ENCODE measurements at regions of chr15 and their contacts with region 1.

Region 1: GRCh38 chr15:69160141-69160993 is at the start of gene GLCE:
- DNase-seq: peak; percentile 95
- ATAC-seq: peak; percentile 96
- H3K4me3 ChIP-seq: peak within 1 kb of the TSS; percentile 58 to 86 (median 76)
- H3K4me3 Mint-ChIP-seq: peak within 1 kb of the TSS; percentile 96
- H3K27ac ChIP-seq: peak within 1 kb of the TSS; percentile 8 to 70
- H3K27ac Mint-ChIP-seq: peak within 1 kb of the TSS; percentile 83
- H3K4me1 ChIP-seq: peaks cover 12 to 13% of the 10 kb centered on the region in 2 donors
- H3K4me1 Mint-ChIP-seq: peaks cover 16% of the 10 kb centered on the region
- H3K27me3 ChIP-seq: no peaks in the 10 kb centered on the region
- H3K27me3 Mint-ChIP-seq: peaks cover 12% of the 10 kb centered on the region
- CTCF ChIP-seq: no peak
- total RNA-seq, gene GLCE: 5.3 and 5.4 TPM in 2 replicates

Region 2: GRCh38 chr15:67967871-67968431 is 1192.4 kb before region 1 on chr15:
- CTCF ChIA-PET with region 1: no interaction called
- POLR2A ChIA-PET with region 1: interaction called, 12 read pairs
- intact Hi-C with region 1: no loop called
- DNase-seq: peak; percentile 39
- ATAC-seq: no peak
- H3K4me3 ChIP-seq: peak overlapping the region in 2 of 5 experiments; percentile 27 to 36
- H3K4me3 Mint-ChIP-seq: peak overlapping the region; percentile 75
- H3K27ac ChIP-seq: no peak overlapping the region
- H3K27ac Mint-ChIP-seq: no peak overlapping the region
- H3K4me1 ChIP-seq: peaks cover 11% of the 10 kb centered on the region in 2 donors
- H3K4me1 Mint-ChIP-seq: peaks cover 13% of the 10 kb centered on the region
- H3K27me3 ChIP-seq: peaks cover 0 to 14% (median 8%) of the 10 kb centered on the region in 4 experiments
- H3K27me3 Mint-ChIP-seq: peaks cover 38% of the 10 kb centered on the region
- CTCF ChIP-seq: no peak

Region 3: GRCh38 chr15:69090197-69090948 is 70.0 kb before region 1 on chr15:
- CTCF ChIA-PET with region 1: no interaction called
- POLR2A ChIA-PET with region 1: no interaction called
- intact Hi-C with region 1: no loop called
- DNase-seq: no peak
- ATAC-seq: no peak
- H3K4me3 ChIP-seq: no peak overlapping the region
- H3K4me3 Mint-ChIP-seq: no peak overlapping the region
- H3K27ac ChIP-seq: no peak overlapping the region
- H3K27ac Mint-ChIP-seq: no peak overlapping the region
- H3K4me1 ChIP-seq: no peaks in the 10 kb centered on the region
- H3K4me1 Mint-ChIP-seq: no peaks in the 10 kb centered on the region
- H3K27me3 ChIP-seq: peaks cover 0 to 9% (median 0%) of the 10 kb centered on the region in 4 experiments
- H3K27me3 Mint-ChIP-seq: peaks cover 42% of the 10 kb centered on the region
- CTCF ChIP-seq: no peak

Region 4: GRCh38 chr15:69185706-69186105 is 25.3 kb after region 1 on chr15:
- CTCF ChIA-PET with region 1: no interaction called
- POLR2A ChIA-PET with region 1: no interaction called
- intact Hi-C with region 1: no loop called
- DNase-seq: peak; percentile 16
- ATAC-seq: no peak
- H3K4me3 ChIP-seq: no peak overlapping the region
- H3K4me3 Mint-ChIP-seq: no peak overlapping the region
- H3K27ac ChIP-seq: no peak overlapping the region
- H3K27ac Mint-ChIP-seq: no peak overlapping the region
- H3K4me1 ChIP-seq: peaks cover 7 to 10% of the 10 kb centered on the region in 2 donors
- H3K4me1 Mint-ChIP-seq: peaks cover 14% of the 10 kb centered on the region
- H3K27me3 ChIP-seq: no peaks in the 10 kb centered on the region
- H3K27me3 Mint-ChIP-seq: no peaks in the 10 kb centered on the region
- CTCF ChIP-seq: no peak

Region 5: GRCh38 chr15:69213786-69214185 is 53.4 kb after region 1 on chr15:
- CTCF ChIA-PET with region 1: no interaction called
- POLR2A ChIA-PET with region 1: no interaction called
- intact Hi-C with region 1: no loop called
- DNase-seq: no peak
- ATAC-seq: no peak
- H3K4me3 ChIP-seq: no peak overlapping the region
- H3K4me3 Mint-ChIP-seq: no peak overlapping the region
- H3K27ac ChIP-seq: no peak overlapping the region
- H3K27ac Mint-ChIP-seq: no peak overlapping the region
- H3K4me1 ChIP-seq: no peaks in the 10 kb centered on the region
- H3K4me1 Mint-ChIP-seq: no peaks in the 10 kb centered on the region
- H3K27me3 ChIP-seq: no peaks in the 10 kb centered on the region
- H3K27me3 Mint-ChIP-seq: no peaks in the 10 kb centered on the region
- CTCF ChIP-seq: no peak

Region 6: GRCh38 chr15:69394556-69395282 is 234.4 kb after region 1 on chr15:
- CTCF ChIA-PET with region 1: interaction called, 7 read pairs
- POLR2A ChIA-PET with region 1: no interaction called
- intact Hi-C with region 1: loop called (anchors 1 kb)
- DNase-seq: peak; percentile 86
- ATAC-seq: peak; percentile 98
- H3K4me3 ChIP-seq: no peak overlapping the region
- H3K4me3 Mint-ChIP-seq: peak overlapping the region; percentile 13
- H3K27ac ChIP-seq: no peak overlapping the region
- H3K27ac Mint-ChIP-seq: no peak overlapping the region
- H3K4me1 ChIP-seq: peaks cover 3 to 7% of the 10 kb centered on the region in 2 donors
- H3K4me1 Mint-ChIP-seq: peaks cover 6% of the 10 kb centered on the region
- H3K27me3 ChIP-seq: peaks cover 0 to 3% (median 0%) of the 10 kb centered on the region in 4 experiments
- H3K27me3 Mint-ChIP-seq: peaks cover 3% of the 10 kb centered on the region
- CTCF ChIP-seq: peak; percentile 93

Region 7: DNA sequence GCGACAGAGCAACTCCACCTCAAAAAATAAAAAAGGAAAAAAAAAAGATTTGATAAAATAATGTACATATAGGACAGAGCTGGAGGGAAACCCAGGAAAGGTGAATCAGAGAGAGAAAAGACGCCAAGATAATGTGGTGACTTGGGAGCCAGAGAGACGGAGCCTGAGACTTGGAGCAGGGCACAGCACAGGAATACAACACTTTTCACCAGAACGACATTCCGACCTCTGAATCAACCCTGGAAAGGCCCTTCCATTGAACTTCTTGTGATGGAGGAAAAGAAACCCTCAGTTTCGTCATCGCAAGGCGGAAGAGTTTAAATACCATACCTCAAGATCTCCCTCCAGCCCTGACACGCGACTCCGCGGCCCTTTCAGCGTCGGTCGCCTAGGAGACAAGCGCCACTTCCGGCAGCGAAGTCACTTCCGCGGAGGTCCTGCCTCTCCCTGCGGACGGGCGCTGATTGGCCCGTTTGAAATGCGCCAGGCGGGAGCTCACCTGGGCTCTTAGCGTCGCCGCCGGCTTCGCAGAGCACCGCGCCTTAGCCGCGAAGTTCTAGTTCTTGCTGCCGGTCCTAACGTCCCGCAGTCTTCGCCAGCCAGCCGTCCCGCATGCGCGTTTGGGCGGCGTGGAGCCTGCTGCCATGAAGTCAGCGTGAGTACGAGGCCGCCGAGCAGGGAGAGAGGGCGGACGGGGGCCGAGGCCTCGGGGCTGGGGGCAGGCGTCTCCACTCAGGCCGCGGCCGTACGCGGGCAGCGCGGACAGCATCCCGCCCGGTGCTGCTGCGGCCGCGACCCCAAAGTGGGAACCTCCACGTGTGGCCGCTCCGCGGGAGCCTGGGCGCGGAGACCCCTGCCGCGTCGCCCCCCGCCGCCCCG is 253.7 kb after region 1 on chr15 and contains the start of gene KIF23:
- CTCF ChIA-PET with region 1: no interaction called
- POLR2A ChIA-PET with region 1: no interaction called
- intact Hi-C with region 1: loop called (anchors 1 kb)
- DNase-seq: peak; percentile 94
- ATAC-seq: peak; percentile 96
- H3K4me3 ChIP-seq: peak within 1 kb of the TSS; percentile 58 to 80 (median 70)
- H3K4me3 Mint-ChIP-seq: peak within 1 kb of the TSS; percentile 93
- H3K27ac ChIP-seq: no peak within 1 kb of the TSS
- H3K27ac Mint-ChIP-seq: peak within 1 kb of the TSS; percentile 62
- H3K4me1 ChIP-seq: peaks cover 5 to 9% of the 10 kb centered on the region in 2 donors
- H3K4me1 Mint-ChIP-seq: peaks cover 13% of the 10 kb centered on the region
- H3K27me3 ChIP-seq: peaks cover 0 to 8% (median 2%) of the 10 kb centered on the region in 4 experiments
- H3K27me3 Mint-ChIP-seq: peaks cover 16% of the 10 kb centered on the region
- CTCF ChIP-seq: no peak
- total RNA-seq, gene KIF23: 0.30 and 0.41 TPM in 2 replicates

Region 8: GRCh38 chr15:69452692-69453521 is 292.5 kb after region 1 on chr15 and contains the start of gene RPLP1:
- CTCF ChIA-PET with region 1: no interaction called
- POLR2A ChIA-PET with region 1: interaction called, 7 read pairs
- intact Hi-C with region 1: loop called (anchors 2 kb)
- DNase-seq: peak; percentile 97
- ATAC-seq: peak; percentile 91
- H3K4me3 ChIP-seq: peak within 1 kb of the TSS; percentile 77 to 97 (median 88)
- H3K4me3 Mint-ChIP-seq: peak within 1 kb of the TSS; percentile 100
- H3K27ac ChIP-seq: peak within 1 kb of the TSS; percentile 77 to 93
- H3K27ac Mint-ChIP-seq: peak within 1 kb of the TSS; percentile 100
- H3K4me1 ChIP-seq: peaks cover 26% of the 10 kb centered on the region in 2 donors
- H3K4me1 Mint-ChIP-seq: peaks cover 43% of the 10 kb centered on the region
- H3K27me3 ChIP-seq: no peaks in the 10 kb centered on the region
- H3K27me3 Mint-ChIP-seq: no peaks in the 10 kb centered on the region
- CTCF ChIP-seq: no peak
- total RNA-seq, gene RPLP1: 2,373 and 2,400 TPM in 2 replicates

Region 9: DNA sequence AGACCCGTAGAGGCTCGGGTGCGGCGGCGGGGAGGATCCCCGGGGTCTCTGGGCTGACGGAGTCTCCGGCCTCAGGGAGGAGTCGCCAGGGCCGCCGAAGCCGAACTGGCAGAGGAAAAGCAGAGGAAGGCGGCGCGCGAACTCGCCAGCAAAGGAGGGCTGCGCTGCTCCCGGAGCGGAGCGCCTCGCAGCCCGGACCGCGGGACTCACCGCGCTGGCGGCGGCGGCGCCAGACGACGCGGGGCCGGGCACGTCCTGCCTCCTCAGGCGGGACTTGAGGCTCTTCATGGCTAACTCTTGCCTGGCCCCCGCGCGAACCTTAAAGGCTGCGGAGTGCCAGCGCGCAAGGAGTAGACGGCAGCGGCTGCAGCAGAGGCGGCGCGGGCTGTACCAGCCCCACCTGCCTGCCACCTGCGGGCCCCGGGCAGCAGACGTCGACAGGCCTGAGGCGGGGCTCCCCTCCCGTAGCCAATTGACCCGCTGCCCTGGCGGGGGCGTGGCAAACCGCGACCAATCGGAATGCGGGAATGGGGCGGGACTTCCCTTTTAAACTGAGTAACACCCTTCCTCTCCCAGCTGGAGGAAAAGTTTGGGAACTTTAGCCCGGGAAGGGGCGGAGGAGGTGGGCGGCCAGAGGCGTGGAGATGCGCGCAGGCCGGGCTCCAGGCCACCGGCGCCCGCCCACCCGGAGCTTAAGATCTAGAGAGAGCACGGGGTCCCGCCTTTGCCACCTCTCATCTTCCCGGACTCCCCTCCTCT is 1602.9 kb after region 1 on chr15 and contains the start of gene UACA:
- CTCF ChIA-PET with region 1: no interaction called
- POLR2A ChIA-PET with region 1: no interaction called
- intact Hi-C with region 1: loop called (anchors 5 kb)
- DNase-seq: peak; percentile 88
- ATAC-seq: peak; percentile 99
- H3K4me3 ChIP-seq: peak within 1 kb of the TSS in 4 of 5 experiments; percentile 58 to 79 (median 74)
- H3K4me3 Mint-ChIP-seq: peak within 1 kb of the TSS; percentile 93
- H3K27ac ChIP-seq: peak within 1 kb of the TSS in 1 of 2 donors; percentile 46
- H3K27ac Mint-ChIP-seq: peak within 1 kb of the TSS; percentile 37
- H3K4me1 ChIP-seq: peaks cover 24 to 26% of the 10 kb centered on the region in 2 donors
- H3K4me1 Mint-ChIP-seq: peaks cover 19% of the 10 kb centered on the region
- H3K27me3 ChIP-seq: peaks cover 2 to 23% (median 18%) of the 10 kb centered on the region in 4 experiments
- H3K27me3 Mint-ChIP-seq: peaks cover 34% of the 10 kb centered on the region
- CTCF ChIP-seq: no peak
- total RNA-seq, gene UACA: 1.8 and 2.7 TPM in 2 replicates

Measured in B cell (primary cell).